ENCODE measurements at regions of chr2 and their contacts with region 1.

Region 1: GRCh38 chr2:223993621-223994232 is 36.5 kb downstream of the MRPL44 start:
- DNase-seq: peak; percentile 74
- H3K4me3 Mint-ChIP-seq: no peak overlapping the region
- H3K27ac Mint-ChIP-seq: no peak overlapping the region
- H3K4me1 Mint-ChIP-seq: no peaks in the 10 kb centered on the region
- H3K27me3 Mint-ChIP-seq: no peaks in the 10 kb centered on the region

Region 2: DNA sequence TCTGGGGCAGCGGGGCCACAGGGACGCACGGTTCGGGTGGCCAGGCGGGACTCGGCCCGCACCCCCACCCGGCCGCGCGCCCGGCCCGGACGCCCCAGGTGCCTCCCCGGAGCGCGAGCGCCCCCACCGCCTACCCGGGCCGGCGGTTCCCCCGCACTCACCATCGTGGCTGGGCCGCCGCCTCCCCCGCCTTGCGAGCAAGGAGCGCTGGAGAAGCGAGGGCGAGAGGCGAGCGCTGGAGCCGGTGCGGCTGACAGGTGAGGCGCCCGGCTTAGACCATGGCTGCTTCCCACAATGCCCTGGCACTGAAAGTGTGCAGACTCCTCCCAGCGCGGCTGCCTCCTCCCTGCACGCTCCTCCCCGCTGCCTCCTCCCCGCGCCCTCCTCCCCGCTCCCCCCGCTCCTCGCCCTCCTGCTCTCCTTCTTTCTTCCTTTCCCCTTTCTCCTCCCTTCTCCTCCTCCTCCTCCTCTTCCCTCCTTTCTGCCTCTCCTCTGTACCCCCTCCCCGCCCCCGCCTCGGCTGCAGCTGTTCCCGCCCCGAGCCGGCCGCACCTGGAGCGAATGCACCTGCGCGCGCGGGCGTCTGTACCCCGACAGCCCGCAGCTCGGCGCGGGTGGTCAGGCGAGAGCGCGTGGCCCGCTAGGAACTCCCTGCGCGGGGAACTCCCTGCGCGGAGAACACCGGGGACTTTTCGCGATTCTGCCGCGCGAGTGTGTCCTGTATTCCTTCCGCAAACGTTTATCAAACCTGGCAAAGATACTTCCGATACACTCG is 156.3 kb before region 1 on chr2 and contains the start of gene AP1S3:
- CTCF ChIA-PET with region 1: no interaction called
- DNase-seq: peak; percentile 86
- H3K4me3 Mint-ChIP-seq: peak within 1 kb of the TSS; percentile 98
- H3K27ac Mint-ChIP-seq: peak within 1 kb of the TSS; percentile 55
- H3K4me1 Mint-ChIP-seq: peaks cover 21% of the 10 kb centered on the region
- H3K27me3 Mint-ChIP-seq: peaks cover 5% of the 10 kb centered on the region

Region 3: GRCh38 chr2:223970343-223971128 is 23.2 kb before region 1 on chr2:
- CTCF ChIA-PET with region 1: interaction called, 62 read pairs
- DNase-seq: peak; percentile 66
- H3K4me3 Mint-ChIP-seq: no peak overlapping the region
- H3K27ac Mint-ChIP-seq: no peak overlapping the region
- H3K4me1 Mint-ChIP-seq: peaks cover 2% of the 10 kb centered on the region
- H3K27me3 Mint-ChIP-seq: no peaks in the 10 kb centered on the region

Region 4: DNA sequence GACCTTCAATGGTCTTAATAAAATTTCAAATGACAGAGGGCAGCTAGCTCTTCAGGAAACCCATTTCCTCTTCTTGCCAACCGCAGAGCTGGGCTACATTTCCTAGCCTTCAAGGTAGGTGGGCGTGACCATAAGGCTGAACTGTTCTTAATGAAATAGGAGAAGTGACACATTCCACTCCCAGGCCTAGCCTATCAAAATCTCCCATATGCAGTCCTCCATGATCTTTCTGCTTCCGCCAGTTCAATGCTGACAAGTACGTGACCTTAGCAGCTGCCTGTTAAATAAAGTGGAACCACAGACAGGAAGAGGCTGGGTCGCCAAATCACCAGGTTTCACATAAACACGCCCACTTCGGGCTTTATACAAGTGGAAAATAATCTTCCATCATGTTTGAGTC is 32.1 kb after region 1 on chr2:
- CTCF ChIA-PET with region 1: interaction called, 32 read pairs
- DNase-seq: peak; percentile 80
- H3K4me3 Mint-ChIP-seq: peak overlapping the region; percentile 30
- H3K27ac Mint-ChIP-seq: peak overlapping the region; percentile 97
- H3K4me1 Mint-ChIP-seq: peaks cover 63% of the 10 kb centered on the region
- H3K27me3 Mint-ChIP-seq: no peaks in the 10 kb centered on the region

Region 5: DNA sequence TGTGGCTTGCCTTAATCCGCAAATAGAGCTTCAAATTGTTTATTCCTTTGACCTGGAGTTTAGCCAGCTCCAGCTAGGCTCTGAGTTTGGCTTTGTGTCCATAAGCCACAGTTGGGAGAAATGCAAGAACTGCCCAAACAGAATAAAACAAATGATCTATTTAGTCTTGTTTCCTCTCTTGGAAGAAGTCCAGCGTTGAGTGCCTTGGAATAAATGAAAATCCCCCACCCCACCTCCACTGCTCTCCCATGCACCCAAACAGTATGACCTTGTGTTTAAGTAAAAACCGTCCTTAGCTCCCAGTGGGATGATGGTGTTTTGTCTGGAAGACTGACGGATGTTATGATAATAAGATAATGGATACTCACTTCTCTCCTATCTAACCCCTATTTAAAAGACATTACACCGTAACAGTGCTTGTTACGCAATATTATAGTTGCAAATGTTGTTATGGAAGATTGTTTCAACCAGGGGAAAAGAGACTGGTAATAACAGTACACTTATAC is 48.5 kb after region 1 on chr2:
- CTCF ChIA-PET with region 1: interaction called, 14 read pairs
- DNase-seq: no peak
- H3K4me3 Mint-ChIP-seq: no peak overlapping the region
- H3K27ac Mint-ChIP-seq: no peak overlapping the region
- H3K4me1 Mint-ChIP-seq: peaks cover 18% of the 10 kb centered on the region
- H3K27me3 Mint-ChIP-seq: peaks cover 55% of the 10 kb centered on the region

Region 6: GRCh38 chr2:224136396-224136795 is 142.7 kb after region 1 on chr2:
- CTCF ChIA-PET with region 1: no interaction called
- DNase-seq: no peak
- H3K4me3 Mint-ChIP-seq: no peak overlapping the region
- H3K27ac Mint-ChIP-seq: no peak overlapping the region
- H3K4me1 Mint-ChIP-seq: no peaks in the 10 kb centered on the region
- H3K27me3 Mint-ChIP-seq: no peaks in the 10 kb centered on the region

Region 7: GRCh38 chr2:224284134-224284946 is 290.6 kb after region 1 on chr2:
- CTCF ChIA-PET with region 1: interaction called, 189 read pairs
- DNase-seq: peak; percentile 23
- H3K4me3 Mint-ChIP-seq: no peak overlapping the region
- H3K27ac Mint-ChIP-seq: no peak overlapping the region
- H3K4me1 Mint-ChIP-seq: no peaks in the 10 kb centered on the region
- H3K27me3 Mint-ChIP-seq: peaks cover 24% of the 10 kb centered on the region

Measured in activated naive CD4-positive, alpha-beta T cell treated with anti-CD3 and anti-CD28 coated beads, Interleukin-2, amount 10 ng/mL, durations not matched to agents 7 days and 5 days (primary cell).